Activated T-helper 2 cell treated with anti-CD3 and anti-CD28 coated beads, Interferon-gamma antibody, Interleukin-2, Interleukin-4, amounts not matched to agents 10 μg/mL and 5 μg/mL and 100 μg/mL, durations not matched to agents 14 hours and 24 hours and 36 hours (primary cell): ENCODE measurements at regions of chr3 and their contacts with region 1.

Region 1: DNA sequence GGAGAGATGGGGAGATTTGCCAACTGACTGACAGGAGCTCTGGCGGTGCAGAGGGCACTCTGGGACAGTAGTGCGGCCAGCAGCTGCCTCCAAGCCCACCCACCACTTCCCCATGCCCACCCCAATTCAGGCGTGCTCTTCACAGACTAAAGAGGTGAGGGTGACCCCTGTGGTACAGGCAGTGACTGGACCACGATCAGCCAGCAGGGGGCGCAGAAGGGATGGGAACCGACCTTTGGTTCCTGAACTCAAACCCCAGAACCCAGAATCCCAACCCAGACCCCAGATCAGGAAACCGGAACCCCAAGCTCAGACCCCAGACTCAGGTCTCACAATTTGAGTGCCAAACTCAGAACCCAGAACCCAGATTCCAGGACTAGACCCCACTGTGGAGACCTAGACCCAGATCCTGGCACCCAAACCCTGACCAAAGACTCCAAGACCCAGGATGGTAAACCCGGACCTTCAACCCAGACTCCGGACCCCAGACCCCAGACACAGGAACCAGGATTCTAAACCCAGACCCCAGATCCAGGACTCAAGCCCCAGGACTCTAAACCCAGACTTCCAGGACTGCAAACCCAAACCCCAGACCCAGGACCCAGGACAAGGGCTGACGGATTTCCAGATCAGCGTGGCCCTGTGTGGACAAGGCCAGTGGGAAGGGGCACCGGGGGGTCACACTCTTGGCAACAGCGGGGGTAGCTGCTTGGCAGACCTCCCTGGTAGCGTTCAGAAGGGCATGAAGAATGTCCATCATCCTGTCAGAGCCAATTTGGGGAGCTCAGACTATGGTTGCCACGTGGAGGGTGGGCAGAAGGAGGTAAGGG is 3.7 kb upstream of the MYL3 start:
- DNase-seq: peak; percentile 54
- H3K4me3 Mint-ChIP-seq: no peak overlapping the region
- H3K27ac Mint-ChIP-seq: no peak overlapping the region
- H3K4me1 Mint-ChIP-seq: no peaks in the 10 kb centered on the region
- H3K27me3 Mint-ChIP-seq: peaks cover 4% of the 10 kb centered on the region

Region 2: GRCh38 chr3:46895204-46895660 is 28.3 kb after region 1 on chr3:
- intact Hi-C with region 1: loop called (anchors 2 kb)
- DNase-seq: peak; percentile 52
- H3K4me3 Mint-ChIP-seq: no peak overlapping the region
- H3K27ac Mint-ChIP-seq: no peak overlapping the region
- H3K4me1 Mint-ChIP-seq: no peaks in the 10 kb centered on the region
- H3K27me3 Mint-ChIP-seq: peaks cover 48% of the 10 kb centered on the region

Region 3: GRCh38 chr3:46909535-46910442 is 42.9 kb after region 1 on chr3:
- intact Hi-C with region 1: loop called (anchors 5 kb)
- DNase-seq: peak; percentile 66
- H3K4me3 Mint-ChIP-seq: no peak overlapping the region
- H3K27ac Mint-ChIP-seq: no peak overlapping the region
- H3K4me1 Mint-ChIP-seq: peaks cover 15% of the 10 kb centered on the region
- H3K27me3 Mint-ChIP-seq: no peaks in the 10 kb centered on the region

Region 4: DNA sequence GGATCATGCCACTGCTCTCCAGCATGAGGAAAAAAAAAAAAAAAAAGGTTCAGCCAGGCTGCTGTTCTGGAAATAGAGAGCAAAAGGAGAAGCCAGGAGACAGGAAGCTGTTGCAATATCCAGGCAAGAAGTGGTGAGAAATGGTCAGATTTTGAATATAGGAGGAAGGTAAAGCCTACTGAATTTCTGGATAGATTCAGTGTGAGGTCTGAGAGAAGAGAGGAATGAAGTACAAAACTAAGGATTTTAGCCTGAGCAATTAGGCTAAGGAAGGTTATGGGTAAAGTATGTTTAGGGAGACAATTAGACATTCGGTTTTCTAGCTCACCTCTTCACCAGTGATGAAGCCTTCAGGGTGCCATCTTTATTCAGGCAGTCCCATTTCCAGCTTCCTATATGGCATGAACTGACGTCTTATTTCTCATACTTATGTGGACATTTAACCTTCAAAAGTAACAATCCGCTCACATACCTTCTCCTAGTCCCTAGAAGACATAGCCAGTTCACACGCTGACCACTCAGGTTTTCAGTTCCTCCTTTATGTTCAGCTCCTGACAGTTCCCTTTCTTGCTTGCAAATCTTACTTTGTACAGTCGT is 358.5 kb after region 1 on chr3:
- intact Hi-C with region 1: no loop called
- DNase-seq: no peak
- H3K4me3 Mint-ChIP-seq: no peak overlapping the region
- H3K27ac Mint-ChIP-seq: no peak overlapping the region
- H3K4me1 Mint-ChIP-seq: peaks cover 4% of the 10 kb centered on the region
- H3K27me3 Mint-ChIP-seq: no peaks in the 10 kb centered on the region

Region 5: GRCh38 chr3:47324278-47324865 is 457.4 kb after region 1 on chr3:
- intact Hi-C with region 1: loop called (anchors 5 kb)
- DNase-seq: peak; percentile 36
- H3K4me3 Mint-ChIP-seq: no peak overlapping the region
- H3K27ac Mint-ChIP-seq: no peak overlapping the region
- H3K4me1 Mint-ChIP-seq: peaks cover 3% of the 10 kb centered on the region
- H3K27me3 Mint-ChIP-seq: no peaks in the 10 kb centered on the region